CD4-positive, alpha-beta T cell (primary cell): ENCODE measurements at regions of chr10 and their contacts with region 1.

Region 1: DNA sequence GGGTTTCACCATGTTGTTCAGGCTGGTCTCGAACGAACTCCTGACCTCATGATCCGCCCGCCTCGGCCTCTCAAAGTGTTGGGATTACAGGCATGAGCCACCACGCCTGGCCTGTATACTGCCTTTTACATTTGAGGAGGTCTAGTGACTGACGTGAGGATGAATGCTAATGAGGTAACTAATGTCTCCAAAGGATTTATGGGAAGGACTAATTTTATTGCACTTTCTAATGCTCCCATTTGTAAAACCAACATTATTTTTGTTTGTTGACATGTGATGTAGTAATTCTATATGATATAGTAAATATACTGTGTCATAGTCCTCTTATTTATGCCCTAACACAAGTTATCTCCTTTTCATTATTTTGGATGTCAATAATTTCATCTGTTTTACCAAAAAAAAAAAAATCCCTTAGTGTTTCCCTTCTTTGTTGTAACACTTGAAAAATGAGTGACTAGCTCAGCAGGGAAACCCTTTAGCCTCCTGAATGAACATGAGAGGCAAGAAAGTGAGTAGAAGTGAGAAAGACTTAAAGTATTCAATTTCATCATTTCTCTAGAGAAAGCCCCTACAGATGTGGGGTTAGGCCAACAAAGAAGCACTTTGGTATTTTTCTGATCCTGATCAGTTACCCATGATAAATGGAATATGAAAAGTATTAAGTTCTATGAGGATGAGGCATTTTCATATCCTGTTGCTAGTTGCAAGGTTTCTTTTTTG is 596.9 kb upstream of the PCDH15 start:
- DNase-seq: no peak
- ATAC-seq: no peak
- H3K4me3 ChIP-seq: no peak overlapping the region
- H3K4me3 Mint-ChIP-seq: no peak overlapping the region
- H3K27ac ChIP-seq: no peak overlapping the region
- H3K27ac Mint-ChIP-seq: no peak overlapping the region
- H3K4me1 ChIP-seq: no peaks in the 10 kb centered on the region
- H3K4me1 Mint-ChIP-seq: no peaks in the 10 kb centered on the region
- H3K27me3 ChIP-seq: no peaks in the 10 kb centered on the region
- H3K27me3 Mint-ChIP-seq: no peaks in the 10 kb centered on the region
- CTCF ChIP-seq: no peak

Region 2: GRCh38 chr10:55369670-55370420 is 28.1 kb before region 1 on chr10:
- CTCF ChIA-PET with region 1: no interaction called
- POLR2A ChIA-PET with region 1: no interaction called
- intact Hi-C with region 1: loop called in 1 of 2 experiments (anchors 2 kb)
- DNase-seq: no peak
- ATAC-seq: no peak
- H3K4me3 ChIP-seq: no peak overlapping the region
- H3K4me3 Mint-ChIP-seq: no peak overlapping the region
- H3K27ac ChIP-seq: no peak overlapping the region
- H3K27ac Mint-ChIP-seq: no peak overlapping the region
- H3K4me1 ChIP-seq: no peaks in the 10 kb centered on the region
- H3K4me1 Mint-ChIP-seq: no peaks in the 10 kb centered on the region
- H3K27me3 ChIP-seq: no peaks in the 10 kb centered on the region
- H3K27me3 Mint-ChIP-seq: no peaks in the 10 kb centered on the region
- CTCF ChIP-seq: no peak